ENCODE measurements at regions of chr6 and their contacts with region 1.

Region 1: DNA sequence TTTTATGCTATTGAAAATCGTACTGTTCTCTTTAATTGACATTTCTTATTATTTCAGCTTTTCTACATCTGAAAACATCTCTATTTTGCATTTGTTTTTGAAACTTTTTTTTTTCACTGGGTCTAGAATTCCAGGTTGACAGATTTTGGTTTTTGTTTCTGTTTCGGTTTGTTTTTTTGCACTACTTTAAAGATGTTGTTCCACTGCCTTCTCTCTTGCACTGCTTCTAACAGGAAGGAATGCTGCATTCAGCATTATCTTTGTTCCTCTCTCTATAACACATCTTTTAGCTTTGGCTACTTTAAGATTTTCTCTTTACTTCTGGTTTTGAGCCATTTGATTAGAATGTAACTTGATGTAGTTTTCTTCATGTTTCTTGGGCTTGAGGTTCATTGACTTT is 20.1 kb upstream of the SLC17A1 start:
- DNase-seq: peak in 1 of 9 experiments; percentile 8
- ATAC-seq: no peak
- H3K4me3 ChIP-seq: no peak overlapping the region
- H3K4me3 Mint-ChIP-seq: no peak overlapping the region
- H3K27ac ChIP-seq: no peak overlapping the region
- H3K27ac Mint-ChIP-seq: no peak overlapping the region
- H3K4me1 ChIP-seq: no peaks in the 10 kb centered on the region
- H3K4me1 Mint-ChIP-seq: peaks cover 5% of the 10 kb centered on the region
- H3K27me3 ChIP-seq: no peaks in the 10 kb centered on the region
- H3K27me3 Mint-ChIP-seq: peaks cover 3% of the 10 kb centered on the region
- CTCF ChIP-seq: no peak

Region 2: DNA sequence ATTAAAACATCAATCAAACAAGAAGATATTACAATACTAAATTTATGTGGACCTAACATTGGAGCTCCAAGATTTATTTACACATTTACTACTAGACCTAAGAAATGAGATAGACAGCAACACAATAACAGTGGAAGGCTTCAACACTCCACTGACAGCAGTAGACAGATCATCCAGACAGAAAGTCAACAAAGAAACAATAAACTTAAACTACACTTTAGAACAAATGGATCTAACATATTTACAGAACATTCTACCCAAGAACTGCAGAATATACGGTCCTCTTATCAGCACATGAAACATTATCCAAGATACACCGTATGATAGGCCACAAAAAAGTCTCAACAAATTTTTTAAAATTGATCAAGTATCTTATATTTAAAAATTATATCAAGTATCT is 47.2 kb before region 1 on chr6:
- CTCF ChIA-PET with region 1: no interaction called
- POLR2A ChIA-PET with region 1: no interaction called
- intact Hi-C with region 1: loop called in 1 of 2 experiments (anchors 1 kb)
- DNase-seq: no peak
- ATAC-seq: no peak
- H3K4me3 ChIP-seq: no peak overlapping the region
- H3K4me3 Mint-ChIP-seq: no peak overlapping the region
- H3K27ac ChIP-seq: no peak overlapping the region
- H3K27ac Mint-ChIP-seq: no peak overlapping the region
- H3K4me1 ChIP-seq: no peaks in the 10 kb centered on the region
- H3K4me1 Mint-ChIP-seq: no peaks in the 10 kb centered on the region
- H3K27me3 ChIP-seq: peaks cover 0 to 3% of the 10 kb centered on the region in 2 experiments
- H3K27me3 Mint-ChIP-seq: peaks cover 21% of the 10 kb centered on the region
- CTCF ChIP-seq: no peak